PC-9 (cell line): ENCODE measurements at regions of chr2 and their contacts with region 1.

Region 1: GRCh38 chr2:61089797-61090196 is 24.1 kb downstream of the SANBR start:
- DNase-seq: no peak
- H3K4me3 ChIP-seq: no peak overlapping the region
- H3K27ac ChIP-seq: no peak overlapping the region
- H3K4me1 ChIP-seq: no peaks in the 10 kb centered on the region
- H3K27me3 ChIP-seq: no peaks in the 10 kb centered on the region
- CTCF ChIP-seq: no peak

Region 2: GRCh38 chr2:61318553-61318952 is 228.8 kb after region 1 on chr2:
- CTCF ChIA-PET with region 1: interaction called, 14 read pairs
- POLR2A ChIA-PET with region 1: no interaction called
- intact Hi-C with region 1: no loop called
- DNase-seq: no peak
- H3K4me3 ChIP-seq: no peak overlapping the region
- H3K27ac ChIP-seq: no peak overlapping the region
- H3K4me1 ChIP-seq: no peaks in the 10 kb centered on the region
- H3K27me3 ChIP-seq: no peaks in the 10 kb centered on the region
- CTCF ChIP-seq: no peak

Region 3: DNA sequence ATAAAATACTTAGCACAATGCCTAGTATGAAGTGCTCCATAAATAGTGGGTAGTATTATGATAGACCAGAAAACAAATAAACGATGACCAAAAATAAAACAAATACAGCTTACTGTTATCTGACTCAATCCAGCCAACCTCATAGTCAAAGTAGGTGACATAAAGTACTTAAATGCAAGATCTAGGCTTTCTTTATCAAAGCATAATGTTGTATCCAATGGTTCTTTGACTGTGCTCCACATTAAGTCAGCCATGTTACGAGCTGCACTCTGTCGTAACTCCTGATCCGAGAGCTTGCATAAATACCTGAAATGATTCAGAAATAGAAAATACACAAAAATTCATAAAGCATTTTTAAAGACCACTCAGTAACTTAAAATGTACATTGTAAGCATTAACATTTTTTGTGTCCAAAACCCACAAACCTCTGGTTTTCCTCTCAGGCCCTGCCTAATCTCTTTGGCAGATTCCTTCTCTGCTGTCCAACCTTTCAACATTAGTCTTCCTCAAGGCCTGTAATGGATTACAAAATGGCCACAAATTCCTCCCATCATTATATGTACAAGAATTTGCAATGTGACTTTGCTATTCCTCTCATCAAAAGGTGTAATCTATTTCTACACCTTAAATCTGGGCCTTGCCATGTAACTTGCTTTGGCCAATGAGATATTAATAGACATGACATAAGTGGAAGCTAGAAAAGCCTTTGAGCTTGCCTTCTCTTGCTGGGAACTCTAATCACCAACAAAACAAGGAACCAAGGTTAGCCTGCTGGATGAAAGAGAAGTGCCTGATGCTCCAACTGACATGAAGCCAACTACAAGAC is 290.5 kb after region 1 on chr2:
- CTCF ChIA-PET with region 1: no interaction called
- POLR2A ChIA-PET with region 1: interaction called, 11 read pairs
- intact Hi-C with region 1: no loop called
- DNase-seq: no peak
- H3K4me3 ChIP-seq: no peak overlapping the region
- H3K27ac ChIP-seq: no peak overlapping the region
- H3K4me1 ChIP-seq: no peaks in the 10 kb centered on the region
- H3K27me3 ChIP-seq: no peaks in the 10 kb centered on the region
- CTCF ChIP-seq: no peak

Region 4: DNA sequence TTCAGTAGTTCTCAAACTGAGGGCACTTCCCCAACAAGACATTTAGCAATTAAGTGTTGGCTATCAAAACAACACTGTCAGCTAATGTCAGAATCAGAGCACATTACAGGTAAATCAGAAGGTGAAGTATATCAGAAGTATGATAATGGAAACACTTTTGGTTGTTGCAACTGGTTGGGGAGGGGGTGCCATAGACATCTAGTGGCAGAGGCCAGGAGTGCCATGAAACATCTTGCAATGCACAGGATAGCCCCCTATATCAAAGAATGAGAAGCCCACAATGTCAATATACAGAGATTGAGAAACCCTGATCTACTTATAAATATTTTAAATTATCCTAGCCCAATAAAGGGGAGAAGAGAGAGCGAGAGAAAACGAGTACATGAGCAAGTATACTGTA is 453.3 kb after region 1 on chr2:
- CTCF ChIA-PET with region 1: no interaction called
- POLR2A ChIA-PET with region 1: no interaction called
- intact Hi-C with region 1: no loop called
- DNase-seq: no peak
- H3K4me3 ChIP-seq: no peak overlapping the region
- H3K27ac ChIP-seq: no peak overlapping the region
- H3K4me1 ChIP-seq: peaks cover 10% of the 10 kb centered on the region
- H3K27me3 ChIP-seq: no peaks in the 10 kb centered on the region
- CTCF ChIP-seq: 0 out of 2 replicates have a peak, but pooled peaks have one; percentile 21